CD8-positive, alpha-beta memory T cell (primary cell): ENCODE measurements at regions of chr15 and their contacts with region 1.

Region 1: GRCh38 chr15:44426975-44427755 is at the start of gene CTDSPL2:
- DNase-seq: peak; percentile 91 to 96 (median 93)
- H3K4me3 ChIP-seq: peak within 1 kb of the TSS; percentile 91
- H3K4me3 Mint-ChIP-seq: peak within 1 kb of the TSS; percentile 96 to 100 (median 98)
- H3K27ac ChIP-seq: peak within 1 kb of the TSS; percentile 95
- H3K27ac Mint-ChIP-seq: peak within 1 kb of the TSS; percentile 97 to 100 (median 99)
- H3K4me1 ChIP-seq: peaks cover 24% of the 10 kb centered on the region
- H3K4me1 Mint-ChIP-seq: peaks cover 46 to 69% (median 60%) of the 10 kb centered on the region in 3 donors
- H3K27me3 ChIP-seq: no peaks in the 10 kb centered on the region
- H3K27me3 Mint-ChIP-seq: peaks cover 0 to 9% of the 10 kb centered on the region in 2 donors
- total RNA-seq, gene CTDSPL2: 63.0 to 69.8 TPM

Region 2: GRCh38 chr15:44286814-44287452 is 140.2 kb before region 1 on chr15:
- CTCF ChIA-PET with region 1: interaction called, 4 read pairs
- POLR2A ChIA-PET with region 1: interaction called, 26 read pairs
- DNase-seq: peak in 1 of 5 donors; percentile 22
- H3K4me3 ChIP-seq: peak overlapping the region; percentile 94
- H3K4me3 Mint-ChIP-seq: peak overlapping the region; percentile 93 to 98 (median 96)
- H3K27ac ChIP-seq: peak overlapping the region; percentile 97
- H3K27ac Mint-ChIP-seq: peak overlapping the region; percentile 97 to 100 (median 99)
- H3K4me1 ChIP-seq: peaks cover 20% of the 10 kb centered on the region
- H3K4me1 Mint-ChIP-seq: peaks cover 40 to 51% (median 45%) of the 10 kb centered on the region in 3 donors
- H3K27me3 ChIP-seq: no peaks in the 10 kb centered on the region
- H3K27me3 Mint-ChIP-seq: peaks cover 6 to 8% of the 10 kb centered on the region in 2 donors

Region 3: DNA sequence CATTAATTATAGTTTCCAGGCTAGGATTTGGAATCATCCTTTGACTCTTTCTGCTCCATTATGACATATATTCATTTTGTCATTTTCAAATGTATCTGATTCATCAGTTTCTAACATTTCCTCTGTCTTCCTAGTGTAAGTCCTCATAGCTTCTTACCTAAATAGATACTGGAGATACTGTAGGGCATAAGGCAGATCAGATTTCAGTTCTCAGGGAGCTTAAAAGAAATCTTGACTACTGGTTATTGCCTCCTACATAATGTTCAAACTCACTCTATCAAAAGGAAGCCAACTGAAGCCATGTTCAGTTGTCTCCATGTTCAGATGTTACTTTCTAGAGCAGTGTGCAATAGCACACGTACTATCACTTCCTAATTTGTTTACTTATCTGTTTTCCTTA is 29.3 kb before region 1 on chr15:
- CTCF ChIA-PET with region 1: no interaction called
- POLR2A ChIA-PET with region 1: interaction called, 10 read pairs
- DNase-seq: no peak
- H3K4me3 ChIP-seq: no peak overlapping the region
- H3K4me3 Mint-ChIP-seq: no peak overlapping the region
- H3K27ac ChIP-seq: no peak overlapping the region
- H3K27ac Mint-ChIP-seq: peak overlapping the region in 2 of 8 donors; percentile 43 to 73
- H3K4me1 ChIP-seq: no peaks in the 10 kb centered on the region
- H3K4me1 Mint-ChIP-seq: peaks cover 7 to 20% (median 15%) of the 10 kb centered on the region in 3 donors
- H3K27me3 ChIP-seq: no peaks in the 10 kb centered on the region
- H3K27me3 Mint-ChIP-seq: no peaks in the 10 kb centered on the region

Region 4: DNA sequence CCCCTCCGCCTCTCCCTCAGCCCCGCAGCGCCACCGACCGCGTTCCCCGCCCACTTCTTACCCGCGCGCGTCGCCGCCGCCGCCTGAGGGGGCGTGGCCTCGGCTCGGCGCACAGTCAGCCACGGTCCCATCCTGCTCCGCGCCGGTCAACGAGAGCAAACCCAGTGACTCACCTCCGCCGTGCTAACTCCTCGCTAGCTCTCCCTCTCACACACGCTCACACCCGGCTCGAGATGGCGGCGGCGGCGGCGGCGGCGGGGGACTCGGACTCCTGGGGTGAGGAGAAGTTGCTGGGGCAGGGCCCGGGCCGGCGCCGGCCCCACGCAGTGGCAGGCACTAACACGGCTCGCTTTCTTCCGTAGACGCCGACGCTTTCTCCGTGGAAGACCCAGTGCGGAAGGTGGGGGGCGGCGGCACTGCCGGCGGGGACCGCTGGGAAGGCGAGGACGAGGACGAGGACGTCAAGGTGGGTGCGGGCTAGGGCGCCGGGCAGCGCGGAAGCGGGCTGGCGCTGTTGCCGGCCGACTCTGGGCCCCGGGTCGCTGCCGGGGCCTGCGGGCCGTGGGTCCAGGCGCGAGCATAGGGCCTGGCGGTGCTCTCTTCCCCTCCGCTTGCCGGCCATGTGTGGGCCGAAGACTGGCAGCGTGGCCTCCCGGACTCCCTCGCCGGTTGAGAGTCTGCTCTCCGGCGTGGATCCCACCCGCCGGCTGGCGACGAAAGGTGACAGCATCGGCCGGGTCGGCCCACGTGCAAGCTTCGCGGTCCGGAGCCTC is 110.0 kb after region 1 on chr15 and contains the start of gene EIF3J:
- CTCF ChIA-PET with region 1: interaction called, 3 read pairs
- POLR2A ChIA-PET with region 1: interaction called, 11 read pairs
- DNase-seq: peak; percentile 90 to 96 (median 95)
- H3K4me3 ChIP-seq: peak within 1 kb of the TSS; percentile 98
- H3K4me3 Mint-ChIP-seq: peak within 1 kb of the TSS; percentile 80 to 97 (median 92)
- H3K27ac ChIP-seq: peak within 1 kb of the TSS; percentile 89
- H3K27ac Mint-ChIP-seq: peak within 1 kb of the TSS; percentile 89 to 98 (median 95)
- H3K4me1 ChIP-seq: peaks cover 43% of the 10 kb centered on the region
- H3K4me1 Mint-ChIP-seq: peaks cover 46 to 70% (median 59%) of the 10 kb centered on the region in 3 donors
- H3K27me3 ChIP-seq: no peaks in the 10 kb centered on the region
- H3K27me3 Mint-ChIP-seq: no peaks in the 10 kb centered on the region
- total RNA-seq, gene EIF3J: 167 to 186 TPM